ENCODE measurements at regions of chr19 and their contacts with region 1.

Region 1: GRCh38 chr19:53132141-53132991 is at the start of gene ZNF415:
- DNase-seq: peak; percentile 89
- H3K4me3 ChIP-seq: peak within 1 kb of the TSS; percentile 30 to 69 (median 44)
- H3K27ac ChIP-seq: peak within 1 kb of the TSS; percentile 63 to 88 (median 84)
- H3K4me1 ChIP-seq: peaks cover 0 to 26% (median 13%) of the 10 kb centered on the region in 6 donors
- H3K27me3 ChIP-seq: peaks cover 0 to 10% (median 0%) of the 10 kb centered on the region in 7 donors
- CTCF ChIP-seq: no peak
- POLR2A ChIP-seq: no peak
- total RNA-seq, gene ZNF415: 7.3 to 17.0 (median 12.8) TPM

Region 2: GRCh38 chr19:53076977-53077376 is 55.4 kb before region 1 on chr19:
- intact Hi-C with region 1: loop called (anchors 10 kb)
- DNase-seq: no peak
- H3K4me3 ChIP-seq: no peak overlapping the region
- H3K27ac ChIP-seq: peak overlapping the region in 4 of 8 donors; percentile 2 to 42 (median 21)
- H3K4me1 ChIP-seq: peaks cover 0 to 27% (median 6%) of the 10 kb centered on the region in 6 donors
- H3K27me3 ChIP-seq: no peaks in the 10 kb centered on the region
- CTCF ChIP-seq: peak in 10 of 11 experiments; percentile 19 to 66 (median 56)
- POLR2A ChIP-seq: no peak

Region 3: GRCh38 chr19:53103198-53103944 is 29.0 kb before region 1 on chr19 and contains the start of gene ZNF160:
- intact Hi-C with region 1: loop called (anchors 2 kb)
- DNase-seq: peak; percentile 100
- H3K4me3 ChIP-seq: peak within 1 kb of the TSS; percentile 55 to 84 (median 80)
- H3K27ac ChIP-seq: peak within 1 kb of the TSS; percentile 84 to 98 (median 96)
- H3K4me1 ChIP-seq: peaks cover 16 to 51% (median 36%) of the 10 kb centered on the region in 6 donors
- H3K27me3 ChIP-seq: no peaks in the 10 kb centered on the region
- CTCF ChIP-seq: peak in 1 of 11 experiments; percentile 19
- POLR2A ChIP-seq: peak; percentile 46 to 88 (median 64)
- total RNA-seq, gene ZNF160: 80.3 to 154 (median 98.6) TPM

Measured in spleen (tissue), 13 donors.